ENCODE measurements at regions of chr18 and their contacts with region 1.

Region 1: DNA sequence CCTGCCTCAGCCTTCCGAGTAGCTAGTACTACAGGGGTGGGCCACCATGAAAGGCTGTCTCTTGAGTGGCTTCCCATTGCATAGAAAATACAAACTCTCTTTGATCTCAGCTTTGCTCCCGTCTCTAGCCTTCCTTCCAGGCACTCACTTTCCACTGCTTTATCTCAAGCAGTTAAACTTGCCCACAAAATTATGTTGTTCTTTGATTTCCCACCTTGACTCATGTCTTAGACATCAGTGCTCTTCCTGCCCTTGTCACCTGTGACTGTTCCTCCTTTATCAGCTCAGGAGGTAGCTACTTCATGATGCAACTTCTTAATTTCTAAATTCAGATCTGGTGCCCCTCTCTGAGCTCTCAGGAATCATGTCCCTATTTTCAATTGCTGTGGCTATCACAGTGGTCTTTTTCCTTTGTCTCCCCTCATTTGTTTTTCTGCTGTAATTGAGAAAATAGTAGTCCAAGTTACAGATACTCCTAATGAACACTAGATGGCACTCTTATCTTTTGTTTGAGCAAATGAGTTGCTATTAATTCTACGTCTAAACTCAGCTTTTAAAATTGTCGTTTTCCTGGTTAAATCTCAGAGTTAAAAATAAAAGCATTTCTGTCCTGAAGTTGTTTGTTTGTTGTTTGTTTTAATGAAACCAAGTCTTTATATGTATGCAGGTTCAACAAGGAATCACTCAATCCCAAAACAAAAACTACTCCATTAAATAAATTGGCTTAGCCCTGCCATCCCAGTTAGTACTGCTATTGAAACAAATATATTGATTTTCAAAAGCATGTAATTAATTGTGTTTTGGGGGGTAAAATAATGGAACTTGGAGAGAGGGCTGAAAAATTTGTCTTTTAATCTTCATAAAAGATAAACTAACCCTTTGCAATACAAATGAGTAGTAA is 46.9 kb upstream of the GREB1L start:
- DNase-seq: no peak
- ATAC-seq: no peak

Region 2: DNA sequence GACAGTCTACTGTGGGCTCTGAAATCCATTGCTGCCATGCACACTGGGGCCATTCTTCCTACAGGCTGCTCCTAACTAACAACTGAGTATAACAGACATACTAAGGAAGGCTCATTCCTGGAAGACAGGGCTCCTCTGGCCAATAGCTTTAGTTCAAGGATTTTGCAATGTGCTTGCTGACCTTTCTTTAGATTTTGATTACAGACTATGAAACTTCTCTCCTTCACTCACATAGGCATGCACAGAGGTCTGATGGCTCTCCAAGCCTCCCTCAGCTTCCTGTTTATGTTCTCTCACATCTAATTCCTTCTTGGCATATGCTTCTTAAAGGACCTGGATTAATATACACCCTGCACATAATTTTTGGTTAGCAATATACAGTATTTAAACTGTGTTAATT is 49.1 kb before region 1 on chr18:
- intact Hi-C with region 1: no loop called
- DNase-seq: no peak
- ATAC-seq: no peak

Region 3: GRCh38 chr18:21444465-21445023 is 249.4 kb after region 1 on chr18:
- intact Hi-C with region 1: loop called (anchors 1 kb)
- DNase-seq: no peak
- ATAC-seq: peak; percentile 50

Region 4: GRCh38 chr18:21955757-21956652 is 760.9 kb after region 1 on chr18:
- intact Hi-C with region 1: loop called (anchors 10 kb)
- DNase-seq: peak; percentile 90
- ATAC-seq: peak; percentile 88

Measured in Right ventricle myocardium inferior (tissue), 1 donor.